Activated B cell treated with CpG ODN at 0.5 μM for 24 hours (primary cell): ENCODE measurements at regions of chr3 and their contacts with region 1.

Region 1: DNA sequence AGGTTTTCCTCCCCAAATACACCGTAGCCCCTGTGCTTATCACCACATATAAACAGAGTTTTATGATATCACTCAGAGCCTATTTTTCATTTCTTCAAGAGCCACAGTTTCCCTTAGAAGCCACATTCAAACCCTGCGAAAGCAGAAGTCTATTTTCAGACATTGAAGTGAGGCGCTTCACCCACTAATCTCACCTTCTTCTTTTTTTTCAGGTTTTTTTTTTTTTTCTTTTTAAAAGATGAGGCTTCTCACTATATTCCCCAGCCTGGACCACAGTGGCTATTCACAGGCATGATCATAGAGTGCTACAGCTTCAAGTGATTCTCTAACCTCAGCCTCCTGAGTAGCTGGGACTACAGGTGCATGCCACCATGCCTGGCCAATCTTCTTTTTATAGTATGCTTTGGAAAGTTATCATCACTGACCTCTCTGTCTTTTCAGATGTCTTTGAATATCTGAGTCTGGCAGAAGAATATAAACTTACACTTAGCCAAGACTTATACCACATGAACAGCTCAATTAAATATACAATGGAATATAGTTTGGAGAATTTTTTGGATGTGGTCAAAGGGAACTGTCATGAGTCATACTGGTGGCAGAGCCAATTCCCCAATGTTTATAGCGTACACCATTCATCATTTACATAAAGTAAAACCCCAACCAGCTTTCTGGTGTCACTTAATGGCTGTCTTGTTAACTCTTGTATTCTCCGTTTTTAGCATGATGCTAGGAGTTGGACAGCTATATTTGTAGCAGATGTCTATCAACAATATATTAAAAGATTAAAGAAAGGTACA is 59.7 kb upstream of the CCDC50 start:
- DNase-seq: no peak
- ATAC-seq: peak; percentile 64
- H3K4me3 Mint-ChIP-seq: peak overlapping the region; percentile 68
- H3K27ac Mint-ChIP-seq: peak overlapping the region; percentile 92
- H3K4me1 Mint-ChIP-seq: peaks cover 51% of the 10 kb centered on the region
- H3K27me3 Mint-ChIP-seq: no peaks in the 10 kb centered on the region
- CTCF ChIP-seq: no peak

Region 2: GRCh38 chr3:191235331-191236314 is 33.9 kb before region 1 on chr3:
- CTCF ChIA-PET with region 1: no interaction called
- POLR2A ChIA-PET with region 1: interaction called, 11 read pairs
- intact Hi-C with region 1: no loop called
- DNase-seq: no peak
- ATAC-seq: peak; percentile 88
- H3K4me3 Mint-ChIP-seq: no peak overlapping the region
- H3K27ac Mint-ChIP-seq: no peak overlapping the region
- H3K4me1 Mint-ChIP-seq: peaks cover 41% of the 10 kb centered on the region
- H3K27me3 Mint-ChIP-seq: no peaks in the 10 kb centered on the region
- CTCF ChIP-seq: no peak

Region 3: GRCh38 chr3:191244242-191244867 is 25.1 kb before region 1 on chr3:
- CTCF ChIA-PET with region 1: no interaction called
- POLR2A ChIA-PET with region 1: interaction called, 8 read pairs
- intact Hi-C with region 1: loop called (anchors 1 kb)
- DNase-seq: no peak
- ATAC-seq: peak; percentile 26
- H3K4me3 Mint-ChIP-seq: no peak overlapping the region
- H3K27ac Mint-ChIP-seq: no peak overlapping the region
- H3K4me1 Mint-ChIP-seq: peaks cover 40% of the 10 kb centered on the region
- H3K27me3 Mint-ChIP-seq: no peaks in the 10 kb centered on the region
- CTCF ChIP-seq: peak; percentile 76

Region 4: GRCh38 chr3:191253089-191253799 is 16.2 kb before region 1 on chr3:
- CTCF ChIA-PET with region 1: no interaction called
- POLR2A ChIA-PET with region 1: interaction called, 4 read pairs
- intact Hi-C with region 1: loop called (anchors 2 kb)
- DNase-seq: no peak
- ATAC-seq: peak; percentile 49
- H3K4me3 Mint-ChIP-seq: peak overlapping the region; percentile 71
- H3K27ac Mint-ChIP-seq: peak overlapping the region; percentile 89
- H3K4me1 Mint-ChIP-seq: peaks cover 64% of the 10 kb centered on the region
- H3K27me3 Mint-ChIP-seq: no peaks in the 10 kb centered on the region
- CTCF ChIP-seq: no peak

Region 5: DNA sequence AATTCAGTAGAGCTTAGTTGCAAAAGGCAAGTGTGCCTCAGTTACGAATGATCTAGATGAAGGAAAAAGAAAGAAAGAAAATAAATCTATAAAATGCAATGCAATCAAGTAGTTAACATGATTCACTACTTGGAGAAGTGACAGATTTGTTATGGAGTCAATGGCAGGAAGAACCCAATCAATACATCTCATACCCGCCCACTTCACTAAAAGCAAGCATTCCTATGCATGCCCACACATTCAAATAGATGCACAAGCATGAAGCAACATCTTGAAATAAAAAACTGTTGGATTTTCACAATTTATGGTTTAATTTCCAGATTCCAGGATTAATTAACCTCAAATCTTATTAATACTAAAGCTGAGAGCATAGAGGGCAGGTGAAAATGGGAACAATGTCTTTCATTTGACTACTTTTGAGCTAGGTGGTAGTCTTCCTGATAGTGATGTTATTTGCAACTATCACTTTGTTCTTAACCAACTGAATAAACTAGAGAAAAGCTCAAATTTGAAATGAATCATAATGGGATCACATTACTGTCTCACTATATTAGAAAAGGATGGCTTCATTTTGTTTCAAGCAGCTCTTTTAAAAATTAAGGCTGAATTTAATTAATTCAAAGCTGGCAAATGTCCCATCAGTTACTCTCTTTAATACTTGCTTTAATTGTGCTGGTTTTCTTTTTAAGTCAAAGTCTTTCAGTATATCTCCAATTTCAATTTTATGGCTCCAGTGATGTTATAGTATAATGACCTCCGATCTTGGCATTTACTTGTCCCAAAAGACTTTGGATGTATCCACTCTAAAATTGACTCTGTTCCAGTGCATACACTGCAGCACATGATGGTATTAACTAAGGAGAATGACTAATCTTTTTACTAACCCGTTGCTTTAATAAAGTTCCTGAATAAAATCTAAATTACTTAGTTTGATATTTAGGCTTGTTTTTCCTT is 13.1 kb after region 1 on chr3:
- CTCF ChIA-PET with region 1: interaction called, 3 read pairs
- POLR2A ChIA-PET with region 1: interaction called, 25 read pairs
- intact Hi-C with region 1: loop called (anchors 1 kb)
- DNase-seq: no peak
- ATAC-seq: no peak
- H3K4me3 Mint-ChIP-seq: no peak overlapping the region
- H3K27ac Mint-ChIP-seq: no peak overlapping the region
- H3K4me1 Mint-ChIP-seq: peaks cover 15% of the 10 kb centered on the region
- H3K27me3 Mint-ChIP-seq: no peaks in the 10 kb centered on the region
- CTCF ChIP-seq: no peak

Region 6: GRCh38 chr3:191296041-191296541 is 26.6 kb after region 1 on chr3:
- CTCF ChIA-PET with region 1: no interaction called
- POLR2A ChIA-PET with region 1: interaction called, 9 read pairs
- intact Hi-C with region 1: loop called (anchors 1 kb)
- DNase-seq: no peak
- ATAC-seq: peak; percentile 77
- H3K4me3 Mint-ChIP-seq: no peak overlapping the region
- H3K27ac Mint-ChIP-seq: no peak overlapping the region
- H3K4me1 Mint-ChIP-seq: peaks cover 34% of the 10 kb centered on the region
- H3K27me3 Mint-ChIP-seq: no peaks in the 10 kb centered on the region
- CTCF ChIP-seq: no peak